ENCODE measurements at regions of chr7 and their contacts with region 1.

Region 1: GRCh38 chr7:23055582-23056178 is 41.8 kb upstream of the HYCC1 start:
- DNase-seq: peak; percentile 75
- H3K4me3 Mint-ChIP-seq: no peak overlapping the region
- H3K27ac Mint-ChIP-seq: no peak overlapping the region
- H3K4me1 Mint-ChIP-seq: peaks cover 4% of the 10 kb centered on the region
- H3K27me3 Mint-ChIP-seq: no peaks in the 10 kb centered on the region

Region 2: DNA sequence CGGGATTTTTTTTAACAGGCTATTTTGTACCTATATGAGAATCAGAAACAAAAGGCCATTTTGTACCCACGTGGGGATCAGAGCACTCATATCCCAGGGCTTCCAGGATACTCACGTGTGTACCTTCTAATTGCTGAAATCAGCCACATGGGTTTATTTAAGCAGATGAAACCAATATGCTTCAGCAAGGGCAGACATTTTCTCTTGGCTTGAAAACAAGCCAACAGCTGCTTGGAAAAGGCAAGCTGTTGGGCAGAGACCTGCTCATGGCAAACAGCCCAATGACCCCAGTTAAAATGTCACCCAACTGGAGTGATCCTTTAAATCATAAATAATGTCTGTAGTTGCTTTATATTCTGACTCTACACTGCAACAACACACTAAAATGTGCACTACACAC is 206.5 kb before region 1 on chr7:
- CTCF ChIA-PET with region 1: interaction called, 10 read pairs
- POLR2A ChIA-PET with region 1: interaction called, 3 read pairs
- DNase-seq: no peak
- H3K4me3 Mint-ChIP-seq: no peak overlapping the region
- H3K27ac Mint-ChIP-seq: no peak overlapping the region
- H3K4me1 Mint-ChIP-seq: peaks cover 7% of the 10 kb centered on the region
- H3K27me3 Mint-ChIP-seq: no peaks in the 10 kb centered on the region

Region 3: DNA sequence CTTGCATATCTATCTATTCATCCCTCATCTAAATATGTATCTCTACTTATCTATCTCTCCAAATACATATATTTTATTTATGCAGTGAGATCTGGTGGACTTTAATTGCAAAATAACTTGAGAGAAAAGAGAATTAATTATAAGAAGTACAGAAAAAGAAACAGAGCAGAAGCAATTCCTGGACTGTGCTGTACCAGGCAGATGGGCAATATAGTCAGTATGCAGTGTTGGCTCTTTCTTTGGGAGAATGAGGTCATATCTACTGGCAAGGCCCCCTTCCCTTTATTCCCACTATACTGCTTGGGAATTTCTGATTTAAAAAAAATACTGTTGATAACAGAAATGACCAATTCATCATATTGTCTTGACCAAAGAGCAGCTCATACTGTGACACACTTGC is 184.0 kb before region 1 on chr7:
- CTCF ChIA-PET with region 1: no interaction called
- POLR2A ChIA-PET with region 1: no interaction called
- DNase-seq: no peak
- H3K4me3 Mint-ChIP-seq: no peak overlapping the region
- H3K27ac Mint-ChIP-seq: no peak overlapping the region
- H3K4me1 Mint-ChIP-seq: no peaks in the 10 kb centered on the region
- H3K27me3 Mint-ChIP-seq: no peaks in the 10 kb centered on the region